AG04449 (cell line): ENCODE measurements at regions of chr15 and their contacts with region 1.

Region 1: GRCh38 chr15:81939604-81940440 is 106.0 kb downstream of the MEX3B start:
- DNase-seq: no peak
- H3K4me3 ChIP-seq: no peak overlapping the region
- CTCF ChIP-seq: peak; percentile 38

Region 2: DNA sequence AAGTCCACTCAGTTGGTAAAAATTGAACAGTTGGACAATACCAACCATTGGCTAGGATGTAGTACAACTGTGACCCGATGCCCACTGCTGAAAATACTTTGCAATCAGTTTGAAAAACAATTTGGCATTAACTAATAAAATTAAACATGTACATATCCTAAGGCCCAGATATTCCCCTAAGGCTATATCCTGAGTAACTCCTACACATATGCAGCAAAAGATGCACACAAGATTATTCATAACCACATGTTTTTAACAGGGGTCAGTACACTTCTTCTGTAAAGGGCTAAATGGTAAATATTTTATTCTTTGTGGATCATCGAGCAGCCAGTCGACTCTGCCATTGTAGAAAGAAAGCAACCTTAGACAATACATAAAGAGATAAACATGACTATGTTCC is 10.3 kb before region 1 on chr15:
- CTCF ChIA-PET with region 1: interaction called, 15 read pairs
- POLR2A ChIA-PET with region 1: no interaction called
- DNase-seq: no peak
- H3K4me3 ChIP-seq: no peak overlapping the region
- CTCF ChIP-seq: no peak